ENCODE measurements at regions of chr15 and their contacts with region 1.

Region 1: DNA sequence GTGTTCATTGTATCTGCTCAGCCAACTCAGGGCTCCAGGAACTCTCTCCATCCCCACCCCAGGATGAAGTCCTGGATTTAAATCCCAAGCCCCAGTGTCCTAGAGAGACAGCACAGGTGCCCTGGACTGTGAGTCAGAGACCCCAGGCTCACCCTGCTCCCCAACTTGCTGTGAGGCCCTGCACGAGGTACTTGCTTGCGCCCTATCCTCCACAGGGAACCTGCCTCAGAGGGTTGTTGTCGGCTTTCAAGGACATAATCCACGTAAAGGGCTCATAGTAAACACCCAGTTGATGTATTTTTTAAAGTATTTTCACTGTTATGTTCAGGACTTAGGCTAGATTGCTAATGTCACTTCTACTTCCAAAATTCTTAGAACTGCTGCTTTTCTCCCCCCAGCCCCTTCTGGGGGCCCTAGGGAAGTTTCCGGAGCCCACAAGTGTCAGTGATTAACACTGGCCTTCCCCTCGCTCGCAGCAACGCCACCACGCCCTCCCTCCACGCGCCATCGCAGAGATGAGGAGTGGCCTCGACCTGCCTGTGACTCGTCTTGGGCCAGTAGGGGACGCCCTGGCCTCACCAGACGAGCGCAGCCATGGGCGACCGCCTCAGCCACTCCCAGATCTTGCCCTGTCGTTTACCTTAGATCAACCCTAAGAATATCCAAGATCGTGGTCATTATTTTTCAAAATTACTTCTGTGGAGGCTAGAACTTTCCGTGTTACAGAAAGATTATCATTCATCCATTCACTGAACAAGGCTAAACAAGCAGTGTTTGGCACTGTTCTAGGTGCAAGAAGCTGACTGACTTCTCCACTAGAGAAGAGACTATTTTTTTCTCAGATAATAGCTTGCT is 6.0 kb upstream of the SRP14 start:
- H3K4me3 ChIP-seq: no peak overlapping the region
- H3K27ac ChIP-seq: peak overlapping the region; percentile 28; the same call in 1 of the 2 replicates
- H3K4me1 ChIP-seq: peaks cover 14% of the 10 kb centered on the region
- CTCF ChIP-seq: peak; percentile 94

Region 2: GRCh38 chr15:39976291-39977274 is 68.4 kb before region 1 on chr15:
- CTCF ChIA-PET with region 1: no interaction called
- POLR2A ChIA-PET with region 1: no interaction called
- H3K4me3 ChIP-seq: peak overlapping the region; percentile 41
- H3K27ac ChIP-seq: peak overlapping the region; percentile 49; the same call in 1 of the 2 replicates
- H3K4me1 ChIP-seq: peaks cover 5% of the 10 kb centered on the region; the same call in 1 of the 2 replicates
- CTCF ChIP-seq: peak; percentile 94

Region 3: GRCh38 chr15:40098489-40099261 is 53.7 kb after region 1 on chr15:
- CTCF ChIA-PET with region 1: interaction called, 56 read pairs
- POLR2A ChIA-PET with region 1: interaction called, 26 read pairs
- H3K4me3 ChIP-seq: no peak overlapping the region
- H3K27ac ChIP-seq: peak overlapping the region; percentile 98
- H3K4me1 ChIP-seq: peaks cover 68% of the 10 kb centered on the region
- CTCF ChIP-seq: no peak

Region 4: GRCh38 chr15:40160689-40161688 is 116.0 kb after region 1 on chr15 and contains the start of gene BUB1B:
- CTCF ChIA-PET with region 1: interaction called, 15 read pairs
- POLR2A ChIA-PET with region 1: interaction called, 3 read pairs
- H3K4me3 ChIP-seq: peak within 1 kb of the TSS; percentile 95
- H3K27ac ChIP-seq: peak within 1 kb of the TSS; percentile 73
- H3K4me1 ChIP-seq: no peaks in the 10 kb centered on the region; the same call in 1 of the 2 replicates
- CTCF ChIP-seq: no peak

Region 5: GRCh38 chr15:40217159-40217824 is 172.3 kb after region 1 on chr15:
- CTCF ChIA-PET with region 1: interaction called, 16 read pairs
- POLR2A ChIA-PET with region 1: no interaction called
- H3K4me3 ChIP-seq: no peak overlapping the region
- H3K27ac ChIP-seq: no peak overlapping the region
- H3K4me1 ChIP-seq: no peaks in the 10 kb centered on the region
- CTCF ChIP-seq: no peak

Measured in HEK293 (cell line).